Sigmoid colon (tissue), 7 donors: ENCODE measurements at regions of chr15 and their contacts with region 1.

Region 1: DNA sequence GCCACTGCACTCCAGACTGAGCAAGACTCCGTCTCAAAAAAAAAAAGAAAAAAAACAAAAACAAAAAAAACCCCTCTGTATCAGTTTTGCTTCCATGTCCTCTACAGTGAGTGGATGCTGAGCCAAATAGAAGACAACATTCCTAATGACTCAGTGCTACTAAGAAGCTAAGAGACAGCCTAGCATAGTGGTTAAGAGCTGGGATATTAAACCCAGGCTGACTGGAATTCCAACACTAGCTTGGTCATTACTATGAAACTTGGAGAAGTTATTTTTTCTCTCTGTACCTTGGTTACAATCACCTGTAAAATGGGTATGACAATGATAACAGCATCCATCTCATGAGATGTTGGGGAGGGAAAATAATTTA is 60.9 kb upstream of the PYGO1 start:
- DNase-seq: no peak
- H3K4me3 ChIP-seq: no peak overlapping the region
- H3K27ac ChIP-seq: no peak overlapping the region
- H3K4me1 ChIP-seq: no peaks in the 10 kb centered on the region
- H3K27me3 ChIP-seq: no peaks in the 10 kb centered on the region
- CTCF ChIP-seq: no peak
- EP300 ChIP-seq: no peak
- POLR2A ChIP-seq: no peak

Region 2: DNA sequence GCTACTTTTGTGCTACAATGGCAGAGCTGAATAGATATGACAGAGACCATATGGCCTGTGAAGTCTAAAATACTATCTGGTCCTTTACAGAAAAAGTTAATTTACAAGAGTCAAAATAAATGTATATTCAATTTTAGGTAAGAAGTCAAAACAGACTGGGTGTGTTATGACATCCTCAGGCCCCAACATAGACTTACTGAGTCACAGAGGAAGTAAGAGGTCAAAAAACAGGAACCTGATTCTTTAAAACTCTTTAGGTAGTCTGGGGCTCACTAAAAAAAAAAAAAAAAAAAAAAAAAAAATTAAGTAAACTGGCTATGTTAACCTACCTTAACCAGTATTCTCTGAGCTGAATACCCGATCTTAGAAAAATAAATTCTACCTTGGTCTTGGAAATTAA is 154.1 kb before region 1 on chr15:
- intact Hi-C with region 1: loop called (anchors 10 kb)
- DNase-seq: no peak
- H3K4me3 ChIP-seq: no peak overlapping the region
- H3K27ac ChIP-seq: no peak overlapping the region
- H3K4me1 ChIP-seq: peaks cover 0 to 8% (median 4%) of the 10 kb centered on the region in 4 donors
- H3K27me3 ChIP-seq: no peaks in the 10 kb centered on the region
- CTCF ChIP-seq: no peak
- EP300 ChIP-seq: no peak
- POLR2A ChIP-seq: no peak

Region 3: GRCh38 chr15:55588070-55588814 is 60.8 kb before region 1 on chr15 and contains the start of gene PYGO1:
- intact Hi-C with region 1: loop called (anchors 5 kb)
- DNase-seq: peak; percentile 81
- H3K4me3 ChIP-seq: peak within 1 kb of the TSS; percentile 59 to 82 (median 64)
- H3K27ac ChIP-seq: peak within 1 kb of the TSS; percentile 91 to 95 (median 94)
- H3K4me1 ChIP-seq: peaks cover 0 to 27% (median 19%) of the 10 kb centered on the region in 4 donors
- H3K27me3 ChIP-seq: no peaks in the 10 kb centered on the region
- CTCF ChIP-seq: no peak
- EP300 ChIP-seq: no peak
- POLR2A ChIP-seq: no peak
- total RNA-seq, gene PYGO1: 14.5 to 20.7 (median 18.6) TPM

Region 4: DNA sequence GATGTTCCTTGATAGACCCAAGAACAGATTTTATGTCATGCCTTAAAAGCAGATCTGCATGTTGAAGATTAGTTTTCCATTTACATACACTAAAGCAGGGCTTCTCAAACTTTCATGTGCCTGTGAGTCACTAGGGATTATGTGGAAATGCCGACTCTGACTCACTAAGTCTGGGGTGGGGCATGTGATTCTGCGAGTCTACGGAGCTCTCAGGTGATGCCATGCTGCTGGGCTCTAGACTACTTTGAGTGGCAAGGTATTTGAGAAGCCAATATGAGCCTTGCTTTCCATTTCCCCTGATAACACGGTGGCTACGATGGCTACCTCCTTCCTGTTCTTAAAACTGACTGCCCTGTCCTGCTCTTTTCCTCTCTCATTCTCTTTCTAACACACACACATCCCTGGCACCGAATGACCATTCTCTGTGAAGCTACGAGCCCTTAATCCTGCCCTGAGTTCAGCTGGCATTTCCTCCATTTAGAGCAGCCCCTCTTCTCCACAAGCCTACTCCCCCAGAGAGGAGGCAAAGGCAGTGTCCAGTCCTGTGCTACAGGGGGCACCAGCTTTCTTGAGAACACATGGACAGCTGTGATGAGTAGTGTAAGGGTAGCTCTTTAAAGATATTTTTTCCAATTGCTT is 21.2 kb before region 1 on chr15:
- intact Hi-C with region 1: no loop called
- DNase-seq: no peak
- H3K4me3 ChIP-seq: no peak overlapping the region
- H3K27ac ChIP-seq: no peak overlapping the region
- H3K4me1 ChIP-seq: no peaks in the 10 kb centered on the region
- H3K27me3 ChIP-seq: no peaks in the 10 kb centered on the region
- CTCF ChIP-seq: no peak
- EP300 ChIP-seq: no peak
- POLR2A ChIP-seq: no peak

Region 5: DNA sequence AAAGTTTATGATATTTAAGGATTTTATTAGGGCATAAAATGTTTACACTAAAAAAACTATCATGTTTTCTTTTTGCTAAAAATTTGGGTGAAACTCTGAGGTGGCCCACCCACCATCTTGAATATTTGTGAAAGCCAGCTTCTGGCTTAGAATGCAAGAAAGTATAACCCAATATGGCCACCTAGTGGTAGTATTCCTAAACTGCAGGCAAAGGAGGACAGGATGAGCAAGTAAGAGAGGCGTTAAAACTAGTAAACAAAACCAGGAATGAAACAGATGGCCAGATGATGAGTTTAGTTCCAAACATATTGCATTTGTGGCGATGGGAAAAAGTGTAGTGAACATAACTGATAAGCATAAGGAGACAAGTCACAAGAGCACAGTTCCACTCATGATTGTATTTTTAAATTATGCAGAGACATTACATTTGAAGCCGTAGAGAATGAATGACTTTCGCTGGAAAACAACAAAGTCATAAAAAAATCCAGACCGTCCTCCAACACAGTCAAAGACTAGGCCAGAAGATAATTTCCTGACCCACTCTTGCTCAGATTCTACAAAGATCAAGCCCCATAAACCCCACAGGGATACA is 197.2 kb after region 1 on chr15:
- intact Hi-C with region 1: loop called (anchors 2 kb)
- DNase-seq: no peak
- H3K4me3 ChIP-seq: no peak overlapping the region
- H3K27ac ChIP-seq: no peak overlapping the region
- H3K4me1 ChIP-seq: no peaks in the 10 kb centered on the region
- H3K27me3 ChIP-seq: no peaks in the 10 kb centered on the region
- CTCF ChIP-seq: peak; percentile 66 to 92 (median 82)
- EP300 ChIP-seq: no peak
- POLR2A ChIP-seq: no peak

Region 6: DNA sequence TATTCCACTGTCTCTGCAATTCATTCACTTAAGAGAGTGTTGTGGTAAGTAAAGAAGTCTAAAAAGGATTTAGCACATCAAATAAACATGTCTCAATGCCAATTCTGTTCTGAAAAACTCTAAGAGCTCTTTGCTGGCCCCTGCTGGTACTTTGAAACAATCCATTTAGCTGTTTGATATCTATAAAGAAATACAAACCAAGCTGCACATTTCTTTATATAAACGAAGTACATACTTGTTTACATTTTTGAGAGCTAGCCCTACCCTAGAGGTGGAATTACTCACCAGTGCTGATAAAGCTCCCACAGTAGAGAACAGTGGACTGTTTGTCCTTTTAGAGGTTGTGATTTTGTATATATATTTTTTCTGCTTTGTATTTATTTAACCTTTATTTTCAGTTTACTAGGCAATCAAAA is 268.9 kb after region 1 on chr15:
- intact Hi-C with region 1: loop called (anchors 10 kb)
- DNase-seq: no peak
- H3K4me3 ChIP-seq: no peak overlapping the region
- H3K27ac ChIP-seq: peak overlapping the region in 2 of 4 donors; percentile 55 to 59
- H3K4me1 ChIP-seq: peaks cover 0 to 30% (median 23%) of the 10 kb centered on the region in 4 donors
- H3K27me3 ChIP-seq: no peaks in the 10 kb centered on the region
- CTCF ChIP-seq: peak in 3 of 4 experiments; percentile 34 to 51 (median 38)
- EP300 ChIP-seq: no peak
- POLR2A ChIP-seq: no peak

Region 7: GRCh38 chr15:56052395-56053045 is 403.5 kb after region 1 on chr15:
- intact Hi-C with region 1: loop called (anchors 10 kb)
- DNase-seq: no peak
- H3K4me3 ChIP-seq: no peak overlapping the region
- H3K27ac ChIP-seq: no peak overlapping the region
- H3K4me1 ChIP-seq: peaks cover 0 to 11% (median 0%) of the 10 kb centered on the region in 4 donors
- H3K27me3 ChIP-seq: no peaks in the 10 kb centered on the region
- CTCF ChIP-seq: peak; percentile 48 to 73 (median 60)
- EP300 ChIP-seq: no peak
- POLR2A ChIP-seq: no peak